ENCODE measurements at regions of chr6 and their contacts with region 1.

Region 1: GRCh38 chr6:81752138-81752920 is at the start of gene TENT5A:
- DNase-seq: peak; percentile 75 to 91 (median 90)
- ATAC-seq: peak; percentile 82
- H3K4me3 ChIP-seq: peak within 1 kb of the TSS; percentile 71
- H3K4me3 Mint-ChIP-seq: peak within 1 kb of the TSS; percentile 87 to 99 (median 98)
- H3K27ac ChIP-seq: peak within 1 kb of the TSS; percentile 74
- H3K27ac Mint-ChIP-seq: peak within 1 kb of the TSS; percentile 83 to 99 (median 96)
- H3K4me1 ChIP-seq: peaks cover 4 to 8% of the 10 kb centered on the region in 2 donors
- H3K4me1 Mint-ChIP-seq: peaks cover 23 to 42% (median 38%) of the 10 kb centered on the region in 7 donors
- H3K27me3 ChIP-seq: no peaks in the 10 kb centered on the region
- H3K27me3 Mint-ChIP-seq: peaks cover 0 to 67% (median 0%) of the 10 kb centered on the region in 5 donors
- total RNA-seq, gene TENT5A: 0.80 to 12.5 (median 7.4) TPM

Region 2: GRCh38 chr6:79869600-79870084 is 1882.7 kb before region 1 on chr6:
- CTCF ChIA-PET with region 1: no interaction called
- POLR2A ChIA-PET with region 1: interaction called, 5 read pairs
- intact Hi-C with region 1: loop called (anchors 2 kb)
- DNase-seq: peak; percentile 57 to 79 (median 71)
- ATAC-seq: peak; percentile 98
- H3K4me3 ChIP-seq: no peak overlapping the region
- H3K4me3 Mint-ChIP-seq: peak overlapping the region; percentile 40 to 77 (median 68)
- H3K27ac ChIP-seq: no peak overlapping the region
- H3K27ac Mint-ChIP-seq: peak overlapping the region in 3 of 9 donors; percentile 53 to 56 (median 56)
- H3K4me1 ChIP-seq: no peaks in the 10 kb centered on the region
- H3K4me1 Mint-ChIP-seq: peaks cover 7 to 20% (median 10%) of the 10 kb centered on the region in 7 donors
- H3K27me3 ChIP-seq: no peaks in the 10 kb centered on the region
- H3K27me3 Mint-ChIP-seq: peaks cover 4 to 19% (median 4%) of the 10 kb centered on the region in 5 donors

Region 3: DNA sequence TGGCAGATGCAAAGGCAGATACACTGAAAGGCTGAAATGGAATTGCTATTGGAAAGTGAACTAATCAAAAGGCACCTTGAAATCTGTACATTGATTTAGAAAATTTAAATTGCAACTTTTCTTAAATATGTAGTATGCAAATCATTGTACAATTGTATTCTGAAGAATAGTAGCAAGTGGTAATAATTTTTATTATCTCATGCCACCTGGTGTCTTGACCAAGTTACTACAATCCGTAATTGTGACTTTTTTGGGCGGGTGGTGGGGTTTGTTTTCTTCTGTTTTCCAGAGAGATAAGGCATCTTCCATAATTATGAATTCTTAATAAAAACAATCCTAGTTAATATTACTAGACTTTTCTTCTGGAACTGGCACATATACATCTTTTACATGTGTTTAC is 1658.3 kb before region 1 on chr6:
- CTCF ChIA-PET with region 1: no interaction called
- POLR2A ChIA-PET with region 1: no interaction called
- intact Hi-C with region 1: loop called in 1 of 2 experiments (anchors 5 kb)
- DNase-seq: peak in 5 of 9 donors; percentile 31 to 36 (median 31)
- ATAC-seq: peak; percentile 67
- H3K4me3 ChIP-seq: no peak overlapping the region
- H3K4me3 Mint-ChIP-seq: no peak overlapping the region
- H3K27ac ChIP-seq: no peak overlapping the region
- H3K27ac Mint-ChIP-seq: no peak overlapping the region
- H3K4me1 ChIP-seq: no peaks in the 10 kb centered on the region
- H3K4me1 Mint-ChIP-seq: peaks cover 0 to 8% (median 7%) of the 10 kb centered on the region in 7 donors
- H3K27me3 ChIP-seq: no peaks in the 10 kb centered on the region
- H3K27me3 Mint-ChIP-seq: peaks cover 7 to 28% (median 12%) of the 10 kb centered on the region in 5 donors

Region 4: GRCh38 chr6:80214436-80215022 is 1537.8 kb before region 1 on chr6:
- CTCF ChIA-PET with region 1: interaction called, 8 read pairs
- POLR2A ChIA-PET with region 1: interaction called, 3 read pairs
- intact Hi-C with region 1: loop called (anchors 1 to 10 kb)
- DNase-seq: peak in 5 of 9 donors; percentile 0 to 29 (median 8)
- ATAC-seq: peak; percentile 81
- H3K4me3 ChIP-seq: no peak overlapping the region
- H3K4me3 Mint-ChIP-seq: no peak overlapping the region
- H3K27ac ChIP-seq: no peak overlapping the region
- H3K27ac Mint-ChIP-seq: no peak overlapping the region
- H3K4me1 ChIP-seq: no peaks in the 10 kb centered on the region
- H3K4me1 Mint-ChIP-seq: peaks cover 0 to 5% (median 0%) of the 10 kb centered on the region in 7 donors
- H3K27me3 ChIP-seq: no peaks in the 10 kb centered on the region
- H3K27me3 Mint-ChIP-seq: no peaks in the 10 kb centered on the region

Region 5: DNA sequence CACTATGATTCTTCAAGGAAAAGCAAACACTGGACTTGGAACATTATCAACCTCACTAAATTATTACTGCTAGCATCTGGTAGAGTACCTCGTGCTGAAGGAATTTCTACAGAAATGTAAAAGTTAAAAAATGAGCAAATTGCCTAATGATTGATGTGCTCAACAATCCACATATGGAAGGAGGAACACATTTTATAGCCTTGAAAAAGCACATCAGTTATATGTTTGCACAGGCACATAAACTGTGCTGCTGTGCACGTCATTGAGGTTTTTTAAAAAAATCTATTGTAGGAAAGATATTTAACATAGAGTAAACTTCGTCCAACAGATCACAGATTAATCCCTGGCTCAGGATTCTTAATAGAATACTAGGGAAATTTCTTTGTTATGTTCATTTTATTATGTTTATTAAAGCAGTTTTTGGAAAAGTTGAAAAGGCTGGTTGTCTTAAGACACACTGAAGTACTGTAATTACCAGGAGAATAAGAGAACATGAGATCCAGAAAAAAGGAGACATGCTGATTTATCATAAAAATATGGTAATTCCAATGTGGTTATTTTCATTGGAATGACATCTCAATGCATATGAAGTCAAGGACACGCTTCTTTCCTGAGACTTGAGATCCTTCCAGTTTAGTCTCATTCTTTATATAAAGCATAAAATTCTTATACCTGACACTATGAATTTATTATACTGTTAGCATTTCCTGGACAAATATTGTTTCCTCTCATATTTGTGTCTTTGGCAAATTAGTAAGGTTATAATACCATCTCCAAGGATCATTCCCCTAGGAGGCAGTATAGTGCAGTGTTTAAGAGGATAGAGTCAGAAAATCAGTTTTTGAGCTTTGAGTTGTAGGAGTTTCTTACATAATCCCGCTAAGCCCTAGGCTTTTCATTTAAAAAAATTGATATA is 510.9 kb before region 1 on chr6:
- CTCF ChIA-PET with region 1: no interaction called
- POLR2A ChIA-PET with region 1: no interaction called
- intact Hi-C with region 1: loop called in 1 of 2 experiments (anchors 5 kb)
- DNase-seq: no peak
- ATAC-seq: no peak
- H3K4me3 ChIP-seq: no peak overlapping the region
- H3K4me3 Mint-ChIP-seq: no peak overlapping the region
- H3K27ac ChIP-seq: no peak overlapping the region
- H3K27ac Mint-ChIP-seq: no peak overlapping the region
- H3K4me1 ChIP-seq: no peaks in the 10 kb centered on the region
- H3K4me1 Mint-ChIP-seq: no peaks in the 10 kb centered on the region
- H3K27me3 ChIP-seq: no peaks in the 10 kb centered on the region
- H3K27me3 Mint-ChIP-seq: no peaks in the 10 kb centered on the region

Region 6: GRCh38 chr6:81668615-81669047 is 83.7 kb before region 1 on chr6:
- CTCF ChIA-PET with region 1: no interaction called
- POLR2A ChIA-PET with region 1: no interaction called
- intact Hi-C with region 1: no loop called
- DNase-seq: no peak
- ATAC-seq: no peak
- H3K4me3 ChIP-seq: no peak overlapping the region
- H3K4me3 Mint-ChIP-seq: no peak overlapping the region
- H3K27ac ChIP-seq: no peak overlapping the region
- H3K27ac Mint-ChIP-seq: no peak overlapping the region
- H3K4me1 ChIP-seq: no peaks in the 10 kb centered on the region
- H3K4me1 Mint-ChIP-seq: peaks cover 0 to 1% (median 0%) of the 10 kb centered on the region in 7 donors
- H3K27me3 ChIP-seq: no peaks in the 10 kb centered on the region
- H3K27me3 Mint-ChIP-seq: peaks cover 0 to 4% (median 0%) of the 10 kb centered on the region in 5 donors

Region 7: DNA sequence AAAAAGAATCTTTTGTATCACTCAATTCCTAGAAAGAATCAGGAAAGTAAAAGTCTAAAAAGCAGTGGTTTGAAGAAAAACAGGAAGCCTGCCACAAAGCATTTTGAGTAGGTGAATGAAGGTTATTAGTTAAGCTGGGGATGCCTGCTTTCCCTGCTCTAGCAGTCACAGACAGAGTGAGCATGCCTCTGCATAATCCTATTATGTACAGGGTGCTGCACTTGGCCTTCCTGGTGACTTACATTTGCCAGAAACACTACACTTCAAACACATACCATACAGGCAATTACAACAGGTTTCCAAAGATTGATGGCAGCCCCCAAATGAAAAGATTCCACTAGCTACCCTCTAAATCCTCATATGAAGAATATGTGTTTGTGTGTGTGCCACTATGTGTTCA is 742.0 kb after region 1 on chr6:
- CTCF ChIA-PET with region 1: no interaction called
- POLR2A ChIA-PET with region 1: no interaction called
- intact Hi-C with region 1: no loop called
- DNase-seq: no peak
- ATAC-seq: no peak
- H3K4me3 ChIP-seq: no peak overlapping the region
- H3K4me3 Mint-ChIP-seq: no peak overlapping the region
- H3K27ac ChIP-seq: no peak overlapping the region
- H3K27ac Mint-ChIP-seq: no peak overlapping the region
- H3K4me1 ChIP-seq: no peaks in the 10 kb centered on the region
- H3K4me1 Mint-ChIP-seq: no peaks in the 10 kb centered on the region
- H3K27me3 ChIP-seq: no peaks in the 10 kb centered on the region
- H3K27me3 Mint-ChIP-seq: no peaks in the 10 kb centered on the region

Region 8: GRCh38 chr6:83067448-83068413 is 1315.4 kb after region 1 on chr6 and contains the start of gene DOP1A:
- CTCF ChIA-PET with region 1: no interaction called
- POLR2A ChIA-PET with region 1: interaction called, 3 read pairs
- intact Hi-C with region 1: loop called (anchors 1 to 10 kb)
- DNase-seq: peak; percentile 91 to 97 (median 95)
- ATAC-seq: peak; percentile 93
- H3K4me3 ChIP-seq: peak within 1 kb of the TSS; percentile 83
- H3K4me3 Mint-ChIP-seq: peak within 1 kb of the TSS; percentile 89 to 96 (median 94)
- H3K27ac ChIP-seq: peak within 1 kb of the TSS; percentile 93
- H3K27ac Mint-ChIP-seq: peak within 1 kb of the TSS; percentile 85 to 97 (median 94)
- H3K4me1 ChIP-seq: peaks cover 16 to 17% of the 10 kb centered on the region in 2 donors
- H3K4me1 Mint-ChIP-seq: peaks cover 21 to 70% (median 57%) of the 10 kb centered on the region in 7 donors
- H3K27me3 ChIP-seq: no peaks in the 10 kb centered on the region
- H3K27me3 Mint-ChIP-seq: no peaks in the 10 kb centered on the region
- total RNA-seq, gene DOP1A: 13.6 to 33.9 (median 25.7) TPM

Measured in naive thymus-derived CD4-positive, alpha-beta T cell (primary cell).